AG04450 (cell line): ENCODE measurements at regions of chr16 and their contacts with region 1.

Region 1: DNA sequence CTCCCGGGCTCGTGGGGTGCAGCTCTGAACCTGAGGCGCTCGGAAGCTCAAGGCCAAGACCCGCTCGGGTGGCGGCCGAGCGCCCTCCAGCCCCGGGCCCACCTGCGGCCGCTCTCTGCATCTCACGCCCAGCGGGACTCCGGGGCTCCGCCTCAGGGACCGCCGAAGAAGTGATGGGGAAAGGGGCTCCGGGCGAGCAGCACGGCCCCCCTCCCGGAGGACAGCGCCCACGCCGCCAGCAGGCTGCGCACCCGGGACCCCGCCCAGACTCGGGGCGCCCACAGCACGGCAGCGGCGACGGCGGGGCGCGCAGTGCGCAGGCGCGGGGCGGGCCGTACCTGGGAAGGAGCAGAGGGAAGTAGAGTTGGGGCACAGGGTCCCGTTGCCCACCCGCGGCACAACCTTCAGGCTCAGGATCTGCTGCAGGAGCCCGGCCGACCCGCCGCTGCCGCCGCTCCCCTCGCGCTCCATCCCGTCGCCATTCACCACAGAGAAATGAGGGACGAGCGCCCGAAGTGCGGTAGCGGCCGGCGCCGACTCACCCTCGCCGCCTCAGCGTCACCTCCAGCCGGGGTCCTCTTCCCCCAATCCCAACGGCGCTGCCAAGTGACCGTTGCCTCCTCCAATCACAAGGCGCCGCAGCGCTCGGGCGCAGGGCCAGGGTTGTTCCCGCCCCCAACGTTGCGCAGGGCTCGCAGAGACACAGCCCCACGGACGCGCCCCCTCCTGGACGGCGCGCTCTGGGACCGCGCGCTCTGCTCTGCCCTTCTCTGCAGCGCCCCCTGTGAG is at the start of gene TMEM170A:
- DNase-seq: peak; percentile 98
- H3K4me3 ChIP-seq: peak within 1 kb of the TSS; percentile 84
- H3K27ac ChIP-seq: peak within 1 kb of the TSS; percentile 87
- H3K27me3 ChIP-seq: no peaks in the 10 kb centered on the region
- CTCF ChIP-seq: peak; percentile 100
- polyA plus RNA-seq, gene TMEM170A: 8.0 and 13.3 TPM in 2 replicates

Region 2: GRCh38 chr16:75198135-75198600 is 266.2 kb before region 1 on chr16:
- CTCF ChIA-PET with region 1: interaction called, 42 read pairs
- POLR2A ChIA-PET with region 1: interaction called, 8 read pairs
- DNase-seq: peak; percentile 61
- H3K4me3 ChIP-seq: peak overlapping the region; percentile 22
- H3K27ac ChIP-seq: peak overlapping the region; percentile 21
- H3K27me3 ChIP-seq: peaks cover 8% of the 10 kb centered on the region
- CTCF ChIP-seq: no peak

Region 3: GRCh38 chr16:75432828-75433731 is 31.2 kb before region 1 on chr16 and contains the start of gene CFDP1:
- CTCF ChIA-PET with region 1: interaction called, 12 read pairs
- POLR2A ChIA-PET with region 1: no interaction called
- DNase-seq: peak; percentile 82
- H3K4me3 ChIP-seq: peak within 1 kb of the TSS; percentile 89
- H3K27ac ChIP-seq: peak within 1 kb of the TSS; percentile 96
- H3K27me3 ChIP-seq: no peaks in the 10 kb centered on the region
- CTCF ChIP-seq: no peak
- polyA plus RNA-seq, gene CFDP1: 64.0 and 81.6 TPM in 2 replicates

Region 4: GRCh38 chr16:75452464-75453190 is 11.7 kb before region 1 on chr16:
- CTCF ChIA-PET with region 1: interaction called, 20 read pairs
- POLR2A ChIA-PET with region 1: no interaction called
- DNase-seq: no peak
- H3K4me3 ChIP-seq: no peak overlapping the region
- H3K27ac ChIP-seq: no peak overlapping the region
- H3K27me3 ChIP-seq: no peaks in the 10 kb centered on the region
- CTCF ChIP-seq: no peak

Region 5: DNA sequence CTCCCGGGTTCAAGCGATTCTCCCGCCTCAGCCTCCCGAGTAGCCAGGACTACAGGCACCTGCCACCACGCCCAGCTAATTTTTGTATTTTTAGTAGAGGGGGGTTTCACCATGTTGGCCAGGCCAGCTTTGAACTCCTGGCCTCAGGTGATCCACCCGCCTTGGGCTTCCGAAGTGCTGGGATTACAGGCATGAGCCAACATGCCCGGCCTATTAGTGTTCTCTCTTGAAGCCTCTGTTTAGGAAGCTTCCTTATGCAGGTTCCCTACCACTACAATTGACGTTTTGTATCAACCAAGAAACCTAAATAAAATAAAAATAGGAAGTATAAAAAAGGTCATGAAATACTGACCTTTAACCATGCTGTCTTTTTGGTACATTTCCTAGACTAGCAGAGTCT is 55.6 kb after region 1 on chr16:
- CTCF ChIA-PET with region 1: interaction called, 34 read pairs
- POLR2A ChIA-PET with region 1: no interaction called
- DNase-seq: no peak
- H3K4me3 ChIP-seq: no peak overlapping the region
- H3K27ac ChIP-seq: no peak overlapping the region
- H3K27me3 ChIP-seq: peaks cover 3% of the 10 kb centered on the region
- CTCF ChIP-seq: no peak

Region 6: DNA sequence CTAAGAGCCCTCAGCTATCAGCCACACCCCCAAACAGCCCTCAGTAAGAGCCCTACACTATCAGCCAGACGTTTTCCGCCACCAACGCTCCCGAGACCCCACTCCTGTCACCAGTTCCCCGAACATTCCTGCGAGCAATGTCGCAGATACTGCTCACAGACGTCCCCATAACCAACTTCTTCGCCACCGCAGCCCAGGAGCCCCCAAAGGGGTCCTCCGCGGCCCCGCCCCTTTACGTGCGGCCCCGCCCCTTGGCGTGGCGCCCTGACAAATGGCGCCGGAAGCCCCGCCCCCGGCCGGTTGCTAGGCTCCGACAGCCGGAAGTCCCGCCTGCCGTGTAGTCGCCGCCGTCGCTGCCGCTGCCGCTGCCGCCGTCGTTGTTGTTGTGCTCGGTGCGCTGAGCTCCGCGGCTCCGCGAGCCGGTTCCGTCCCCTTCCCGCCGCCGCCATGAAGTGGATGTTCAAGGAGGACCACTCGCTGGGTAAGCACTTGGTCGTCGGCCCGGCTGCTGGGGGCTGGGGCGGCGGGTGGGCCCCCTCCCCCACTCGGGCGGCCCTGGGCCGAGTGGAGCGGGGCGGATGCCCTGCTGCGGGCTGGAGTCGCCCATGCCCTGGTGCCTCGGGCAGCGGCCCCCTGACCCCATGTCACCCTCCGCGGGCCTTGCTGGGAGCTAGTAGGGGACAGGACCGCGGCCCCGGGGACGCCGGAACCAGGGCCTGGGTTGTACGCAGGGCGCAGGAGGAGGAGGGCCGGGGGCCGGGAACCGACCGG is 101.9 kb after region 1 on chr16 and contains the start of gene GABARAPL2:
- CTCF ChIA-PET with region 1: interaction called, 13 read pairs
- POLR2A ChIA-PET with region 1: no interaction called
- DNase-seq: no peak
- H3K4me3 ChIP-seq: peak within 1 kb of the TSS; percentile 84
- H3K27ac ChIP-seq: peak within 1 kb of the TSS; percentile 39
- H3K27me3 ChIP-seq: peaks cover 8% of the 10 kb centered on the region
- CTCF ChIP-seq: no peak
- polyA plus RNA-seq, gene GABARAPL2: 70.9 and 89.8 TPM in 2 replicates

Region 7: DNA sequence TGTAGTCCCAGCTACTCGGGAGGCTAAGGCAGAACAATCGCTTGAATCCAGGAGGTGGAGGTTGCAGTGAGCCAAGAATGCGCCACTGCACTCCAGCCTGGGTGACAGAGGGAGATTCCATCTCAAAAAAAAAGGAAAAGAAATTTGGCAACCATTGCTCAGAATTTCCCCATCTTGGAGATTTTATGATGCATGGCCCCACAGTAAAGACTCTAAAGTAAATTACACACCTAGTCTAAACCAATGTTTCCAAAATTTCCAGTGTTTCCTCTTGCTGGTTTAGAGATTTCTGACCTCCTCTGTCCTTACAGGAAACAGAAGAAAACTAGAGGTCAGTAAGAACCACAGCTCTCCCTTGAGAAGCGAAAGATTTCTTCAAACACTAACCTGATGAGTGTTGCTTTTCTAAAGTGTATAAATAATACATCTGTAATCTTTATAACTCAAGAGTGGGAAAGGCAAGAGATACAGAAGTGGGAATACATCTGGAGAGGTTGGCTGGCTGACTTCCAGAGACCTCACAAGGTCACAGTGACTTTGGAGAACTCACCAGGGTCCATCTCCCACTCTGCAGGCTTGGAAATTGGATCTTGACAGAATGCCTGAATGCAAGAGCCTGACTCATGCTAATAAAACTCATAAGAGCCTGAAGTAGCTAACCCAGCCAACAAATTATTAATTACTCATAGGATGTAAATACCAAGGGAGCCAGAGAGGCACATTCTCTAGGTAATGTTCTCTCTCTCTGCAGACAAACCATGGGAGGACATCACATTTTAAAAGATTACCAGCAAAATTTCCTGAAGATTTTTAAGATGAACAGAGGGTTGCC is 150.0 kb after region 1 on chr16:
- CTCF ChIA-PET with region 1: interaction called, 19 read pairs
- POLR2A ChIA-PET with region 1: no interaction called
- DNase-seq: no peak
- H3K4me3 ChIP-seq: no peak overlapping the region
- H3K27ac ChIP-seq: no peak overlapping the region
- H3K27me3 ChIP-seq: no peaks in the 10 kb centered on the region
- CTCF ChIP-seq: no peak